AG04449 (cell line): ENCODE measurements at regions of chr3 and their contacts with region 1.

Region 1: GRCh38 chr3:141452036-141452435 is 34.8 kb upstream of the RASA2 start:
- DNase-seq: no peak
- H3K4me3 ChIP-seq: no peak overlapping the region
- CTCF ChIP-seq: peak; percentile 70

Region 2: DNA sequence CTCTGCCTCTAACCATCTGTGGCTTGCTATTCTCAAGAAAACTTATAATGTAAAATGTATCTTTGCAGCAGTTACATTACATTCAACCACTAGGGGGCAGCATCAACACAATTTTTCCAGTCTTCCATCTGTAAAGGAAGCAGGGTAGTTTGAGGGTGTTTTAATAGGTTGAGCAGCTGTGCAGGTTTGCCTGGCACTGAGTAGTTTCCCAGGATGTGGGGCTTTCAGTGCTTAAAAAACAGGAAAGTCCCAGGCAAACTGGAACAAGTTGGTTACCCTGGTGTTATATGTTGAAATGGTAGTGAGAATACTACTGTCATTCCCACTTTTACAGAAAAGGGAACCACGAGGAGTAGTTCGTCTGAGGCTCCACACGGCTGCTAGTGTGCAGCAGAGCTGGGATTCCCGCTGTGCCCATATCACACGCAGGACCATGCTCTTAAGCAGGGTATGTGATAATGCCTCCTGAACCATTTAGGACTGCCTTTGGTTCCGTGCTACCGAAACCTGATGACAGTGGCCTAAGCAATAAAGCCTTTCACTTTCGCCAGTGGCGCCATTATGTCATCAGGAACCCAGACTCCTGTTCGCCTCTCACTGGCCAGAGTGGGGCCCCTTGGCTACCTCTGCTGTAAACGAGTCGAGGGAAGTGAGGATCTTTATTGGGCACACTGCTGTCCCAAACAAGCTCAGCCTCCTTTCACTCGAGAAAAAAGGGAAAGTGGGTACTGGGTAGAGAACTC is 148.4 kb before region 1 on chr3:
- CTCF ChIA-PET with region 1: interaction called, 624 read pairs
- POLR2A ChIA-PET with region 1: interaction called, 7 read pairs
- DNase-seq: peak; percentile 41
- H3K4me3 ChIP-seq: no peak overlapping the region
- CTCF ChIP-seq: peak; percentile 49

Region 3: GRCh38 chr3:141346418-141346817 is 105.6 kb before region 1 on chr3:
- CTCF ChIA-PET with region 1: interaction called, 13 read pairs
- POLR2A ChIA-PET with region 1: no interaction called
- DNase-seq: no peak
- H3K4me3 ChIP-seq: no peak overlapping the region
- CTCF ChIP-seq: no peak

Region 4: GRCh38 chr3:141402476-141403171 is 49.4 kb before region 1 on chr3:
- CTCF ChIA-PET with region 1: interaction called, 14 read pairs
- POLR2A ChIA-PET with region 1: interaction called, 4 read pairs
- DNase-seq: no peak
- H3K4me3 ChIP-seq: peak overlapping the region; percentile 62
- CTCF ChIP-seq: no peak

Region 5: DNA sequence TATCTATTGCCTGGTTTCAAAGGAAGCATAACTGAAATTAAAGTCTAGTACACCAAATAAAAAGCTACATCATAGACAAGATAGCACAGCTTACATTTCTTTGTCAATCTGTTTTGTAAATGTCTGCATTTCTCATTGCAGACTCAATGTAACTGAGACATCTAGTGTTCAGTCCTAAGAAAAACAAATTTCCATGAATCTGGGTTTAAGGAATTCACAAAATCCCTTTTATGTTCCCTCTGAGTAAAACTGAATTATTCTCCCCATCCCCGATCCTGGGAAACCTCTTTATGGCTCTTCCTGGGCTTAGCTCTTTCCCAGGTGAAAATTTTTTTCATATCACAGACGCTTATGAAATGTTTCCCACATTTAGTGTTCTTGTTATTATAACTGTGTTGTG is 13.2 kb after region 1 on chr3:
- CTCF ChIA-PET with region 1: interaction called, 21 read pairs
- POLR2A ChIA-PET with region 1: no interaction called
- DNase-seq: no peak
- H3K4me3 ChIP-seq: no peak overlapping the region
- CTCF ChIP-seq: peak; percentile 10